CD4-positive, alpha-beta T cell (primary cell): ENCODE measurements at regions of chr4 and their contacts with region 1.

Region 1: DNA sequence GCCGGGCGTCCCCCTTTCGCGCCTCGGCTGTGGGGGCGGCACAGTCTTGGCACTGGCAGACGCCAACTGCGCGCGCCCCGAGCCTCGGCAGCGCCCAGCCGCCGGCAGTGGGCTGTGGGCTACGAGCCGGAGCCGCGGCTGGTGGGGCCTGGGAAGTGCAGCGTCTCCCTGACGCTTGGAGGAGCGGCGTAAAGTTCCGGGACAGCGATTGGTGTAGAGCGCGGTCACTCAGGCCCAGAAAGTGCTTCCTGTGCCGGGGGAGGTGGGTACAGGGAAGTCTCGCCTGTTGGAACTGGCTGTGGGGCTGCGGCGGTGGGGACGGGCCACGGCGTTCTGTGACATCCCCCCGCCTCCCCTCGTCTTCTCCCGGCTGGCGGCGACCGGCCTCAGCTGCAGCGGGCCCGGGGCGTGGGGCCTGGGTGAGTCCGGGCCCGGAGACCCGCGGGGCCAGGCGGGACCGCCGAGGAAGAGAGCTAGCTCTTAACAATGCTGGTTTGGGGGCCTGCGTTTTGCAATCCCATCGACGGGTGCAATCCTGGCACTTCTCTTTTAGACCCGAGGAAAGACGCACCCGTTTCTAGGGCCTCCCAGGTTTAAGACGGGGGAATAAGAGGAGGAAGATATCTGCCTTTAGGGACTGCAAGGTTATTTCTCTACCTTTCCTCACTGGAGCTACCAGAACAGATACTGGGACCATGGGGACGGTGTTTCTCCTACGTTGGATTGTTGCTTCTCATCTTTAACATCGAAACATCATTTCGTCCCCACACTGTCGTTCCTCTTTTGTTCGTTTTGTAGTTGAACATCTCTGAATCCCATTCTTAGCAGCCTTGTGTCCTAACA is at the starts of genes RWDD4 and TRAPPC11:
- DNase-seq: peak; percentile 92 to 99 (median 94)
- ATAC-seq: peak; percentile 99
- H3K4me3 ChIP-seq: peak within 1 kb of the TSS; percentile 81
- H3K4me3 Mint-ChIP-seq: peak within 1 kb of the TSS; percentile 94
- H3K27ac ChIP-seq: peak within 1 kb of the TSS; percentile 74 to 79
- H3K27ac Mint-ChIP-seq: peak within 1 kb of the TSS; percentile 93
- H3K4me1 ChIP-seq: peaks cover 24% of the 10 kb centered on the region
- H3K4me1 Mint-ChIP-seq: peaks cover 56% of the 10 kb centered on the region
- H3K27me3 ChIP-seq: no peaks in the 10 kb centered on the region
- H3K27me3 Mint-ChIP-seq: no peaks in the 10 kb centered on the region
- CTCF ChIP-seq: no peak
- total RNA-seq, gene RWDD4: 9.9 to 10.5 TPM
- total RNA-seq, gene TRAPPC11: 14.7 to 19.2 TPM

Region 2: DNA sequence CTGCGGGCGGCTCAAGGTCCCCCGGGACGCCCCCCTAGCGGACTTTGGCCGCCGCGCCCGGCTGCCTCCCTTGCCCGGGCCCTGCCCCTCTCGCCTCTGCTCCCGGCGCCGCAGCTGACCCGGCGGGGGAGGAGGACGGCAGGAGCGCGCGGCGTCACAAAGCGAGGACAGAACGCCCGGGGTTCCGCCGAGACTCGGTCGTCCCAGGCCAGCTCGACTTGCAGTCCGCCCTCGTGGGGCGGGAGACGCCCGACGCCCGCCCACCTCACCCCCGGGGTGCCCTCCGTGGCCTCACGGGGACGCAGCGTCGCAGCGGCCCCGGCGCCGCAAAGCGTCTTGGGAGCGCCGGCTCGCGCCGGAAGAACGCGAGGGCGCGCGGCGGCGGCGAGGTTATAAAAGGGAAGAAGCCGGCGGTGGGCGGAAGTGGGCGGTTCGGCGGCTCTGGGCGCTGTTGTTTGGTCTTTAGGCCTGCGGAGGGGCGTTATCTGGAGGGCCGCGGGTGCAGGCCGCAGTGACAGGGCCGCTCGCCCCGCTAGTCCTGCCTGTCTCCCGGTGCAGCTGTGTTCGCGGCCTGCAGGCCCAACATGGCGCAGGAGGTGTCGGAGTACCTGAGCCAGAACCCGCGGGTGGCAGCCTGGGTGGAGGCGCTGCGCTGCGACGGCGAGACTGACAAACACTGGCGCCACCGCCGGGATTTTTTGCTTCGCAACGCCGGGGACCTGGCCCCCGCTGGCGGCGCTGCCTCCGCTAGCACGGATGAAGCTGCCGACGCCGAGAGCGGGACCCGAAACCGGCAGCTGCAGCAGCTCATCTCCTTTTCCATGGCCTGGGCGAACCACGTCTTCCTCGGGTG is 214.8 kb before region 1 on chr4 and contains the start of gene CDKN2AIP:
- CTCF ChIA-PET with region 1: no interaction called
- POLR2A ChIA-PET with region 1: interaction called, 13 read pairs
- intact Hi-C with region 1: loop called in 1 of 2 experiments (anchors 1 kb)
- DNase-seq: peak; percentile 89 to 98 (median 94)
- ATAC-seq: peak; percentile 82
- H3K4me3 ChIP-seq: peak within 1 kb of the TSS; percentile 94
- H3K4me3 Mint-ChIP-seq: peak within 1 kb of the TSS; percentile 98
- H3K27ac ChIP-seq: peak within 1 kb of the TSS; percentile 91
- H3K27ac Mint-ChIP-seq: peak within 1 kb of the TSS; percentile 96
- H3K4me1 ChIP-seq: peaks cover 26% of the 10 kb centered on the region
- H3K4me1 Mint-ChIP-seq: peaks cover 55% of the 10 kb centered on the region
- H3K27me3 ChIP-seq: no peaks in the 10 kb centered on the region
- H3K27me3 Mint-ChIP-seq: no peaks in the 10 kb centered on the region
- CTCF ChIP-seq: no peak
- total RNA-seq, gene CDKN2AIP: 55.7 to 56.9 TPM

Region 3: DNA sequence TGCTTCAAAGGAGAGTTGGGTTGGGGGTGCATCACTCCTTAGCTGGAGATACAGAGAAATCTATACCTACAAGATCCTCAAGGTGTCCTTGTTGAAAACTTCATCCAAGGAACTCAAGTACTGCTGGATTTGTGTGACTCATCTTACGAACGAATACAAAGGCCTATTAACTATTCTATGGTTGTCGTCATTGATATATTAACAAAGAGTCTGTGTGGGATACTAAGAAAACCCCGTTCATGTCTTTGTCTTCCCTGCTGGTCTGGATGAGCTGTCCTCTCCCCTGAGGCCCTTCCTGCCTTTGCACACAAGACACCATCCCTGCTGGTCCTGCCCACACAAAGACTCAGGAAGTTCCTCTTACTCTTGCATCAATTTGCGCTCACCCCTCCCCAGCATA is 870.0 kb after region 1 on chr4:
- CTCF ChIA-PET with region 1: no interaction called
- POLR2A ChIA-PET with region 1: no interaction called
- intact Hi-C with region 1: loop called in 1 of 2 experiments (anchors 10 kb)
- DNase-seq: no peak
- ATAC-seq: no peak
- H3K4me3 ChIP-seq: no peak overlapping the region
- H3K4me3 Mint-ChIP-seq: no peak overlapping the region
- H3K27ac ChIP-seq: no peak overlapping the region
- H3K27ac Mint-ChIP-seq: no peak overlapping the region
- H3K4me1 ChIP-seq: peaks cover 19% of the 10 kb centered on the region
- H3K4me1 Mint-ChIP-seq: peaks cover 49% of the 10 kb centered on the region
- H3K27me3 ChIP-seq: no peaks in the 10 kb centered on the region
- H3K27me3 Mint-ChIP-seq: no peaks in the 10 kb centered on the region
- CTCF ChIP-seq: no peak